ENCODE measurements at regions of chr4 and their contacts with region 1.

Region 1: DNA sequence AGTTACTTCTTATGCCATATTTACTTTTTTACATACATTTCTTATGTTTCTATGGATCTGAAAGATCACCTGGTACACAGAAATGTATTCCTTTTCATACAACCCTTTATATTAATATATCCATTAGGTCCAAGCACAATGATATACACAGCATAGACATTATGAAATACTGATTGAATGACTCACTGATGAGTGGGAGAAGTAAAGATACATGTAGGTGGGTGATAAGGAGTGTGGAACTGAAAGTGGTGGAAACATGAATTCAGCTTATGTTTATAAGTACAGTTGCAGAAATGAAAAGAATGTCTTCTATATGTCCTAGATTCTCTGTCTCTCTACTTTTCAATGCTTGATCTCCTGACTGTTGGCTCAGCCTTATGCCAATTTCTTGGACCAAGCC is 87.9 kb downstream of the YIPF7 start:
- DNase-seq: no peak
- H3K4me3 ChIP-seq: no peak overlapping the region
- H3K27ac ChIP-seq: no peak overlapping the region
- H3K4me1 ChIP-seq: no peaks in the 10 kb centered on the region
- H3K27me3 ChIP-seq: no peaks in the 10 kb centered on the region
- CTCF ChIP-seq: no peak
- POLR2A ChIP-seq: no peak

Region 2: GRCh38 chr4:43411226-43411625 is 1152.3 kb before region 1 on chr4:
- intact Hi-C with region 1: loop called (anchors 10 kb)
- DNase-seq: no peak
- H3K4me3 ChIP-seq: no peak overlapping the region
- H3K27ac ChIP-seq: no peak overlapping the region
- H3K4me1 ChIP-seq: no peaks in the 10 kb centered on the region
- H3K27me3 ChIP-seq: no peaks in the 10 kb centered on the region
- CTCF ChIP-seq: no peak
- POLR2A ChIP-seq: no peak

Measured in breast epithelium (tissue), 4 donors.